ENCODE measurements at regions of chr7 and their contacts with region 1.

Region 1: DNA sequence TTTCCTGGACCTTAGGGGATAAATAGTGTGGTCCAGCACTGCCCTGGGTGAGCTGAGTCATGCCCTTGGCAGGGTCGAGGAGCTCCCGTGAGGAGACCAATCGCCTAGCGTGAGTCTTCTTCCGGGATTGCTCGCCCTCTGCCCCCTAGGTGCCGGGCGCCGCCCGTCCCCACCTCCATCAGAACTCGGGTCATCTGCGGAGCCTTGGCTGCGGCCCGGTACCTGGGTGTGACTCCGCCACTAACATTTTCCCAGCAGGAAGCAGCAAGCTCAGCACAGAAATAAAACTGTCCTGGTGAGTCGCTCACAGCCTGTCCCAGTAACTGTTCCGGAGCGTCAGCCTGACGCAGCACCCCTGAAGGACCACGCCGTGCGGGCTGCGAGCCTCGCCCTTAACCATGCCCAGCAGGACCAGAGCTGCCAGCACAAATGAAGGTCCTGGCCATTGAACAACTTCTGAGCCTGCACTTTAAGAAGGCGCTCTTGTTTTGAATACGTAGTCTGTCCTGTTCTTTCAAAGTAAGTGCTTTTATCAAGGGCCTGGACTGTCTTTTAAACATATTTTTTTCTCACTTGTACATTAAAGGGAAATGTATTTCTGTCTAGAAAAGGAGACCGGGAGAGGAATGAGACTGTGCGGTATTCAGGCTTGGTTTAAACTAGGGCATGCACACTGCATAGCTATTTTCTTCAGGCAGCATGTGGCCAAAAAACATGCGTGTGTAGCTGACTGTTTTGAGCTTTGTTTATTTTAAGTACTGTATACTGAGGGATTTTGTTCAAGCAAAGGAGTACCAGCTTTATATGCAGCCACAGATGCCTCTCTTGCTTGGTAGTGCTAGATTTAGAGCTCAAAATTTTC is 136.7 kb downstream of the HECW1 start:
- DNase-seq: peak; percentile 41
- H3K4me3 ChIP-seq: peak overlapping the region; percentile 34
- H3K27me3 ChIP-seq: no peaks in the 10 kb centered on the region
- CTCF ChIP-seq: no peak

Region 2: DNA sequence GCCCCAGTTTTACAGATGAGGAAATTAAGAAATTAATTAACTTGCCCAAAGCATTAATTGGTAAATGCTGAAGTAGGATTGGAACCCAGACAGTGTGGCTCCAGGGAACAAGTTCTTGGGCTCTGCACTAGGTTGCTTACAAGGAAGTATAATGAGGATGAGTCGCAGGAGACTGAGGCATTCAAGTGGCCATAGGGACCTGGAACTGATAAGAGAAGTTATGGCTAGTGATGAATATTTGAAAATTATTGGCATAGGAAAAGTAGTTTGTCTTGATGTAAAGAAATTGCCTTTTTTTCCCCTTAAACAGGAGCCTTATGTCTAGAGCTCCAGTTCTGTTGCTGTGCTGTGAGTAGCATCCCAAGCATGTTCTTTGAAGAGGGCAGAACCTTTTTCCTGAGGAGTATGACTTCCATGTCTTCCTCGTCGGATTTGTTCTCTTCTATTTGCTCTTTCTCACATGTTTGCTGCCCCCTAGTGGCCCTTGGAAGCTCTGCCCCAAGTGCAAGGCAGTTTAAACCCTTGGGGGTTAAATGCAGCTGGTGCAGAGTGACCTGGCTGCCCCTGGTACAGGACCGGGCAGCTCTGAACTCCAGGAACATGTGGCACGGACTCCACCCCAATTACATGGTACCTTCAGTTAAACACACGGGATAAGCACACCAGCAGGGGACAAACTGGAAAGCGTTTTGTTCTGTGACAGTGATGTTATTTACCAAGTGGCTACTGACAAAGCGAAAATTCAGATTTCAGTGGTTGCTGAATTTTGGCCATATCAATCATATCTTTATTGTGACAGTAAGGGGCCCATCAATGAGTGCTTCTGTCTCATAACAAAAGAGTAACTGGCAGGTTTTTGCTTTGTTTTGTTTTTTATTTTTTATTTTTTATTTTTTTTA is 12.0 kb after region 1 on chr7:
- CTCF ChIA-PET with region 1: interaction called, 45 read pairs
- POLR2A ChIA-PET with region 1: no interaction called
- DNase-seq: peak; percentile 37
- H3K4me3 ChIP-seq: no peak overlapping the region
- H3K27me3 ChIP-seq: no peaks in the 10 kb centered on the region
- CTCF ChIP-seq: peak; percentile 94

Region 3: GRCh38 chr7:43288391-43288790 is 39.2 kb after region 1 on chr7:
- CTCF ChIA-PET with region 1: no interaction called
- POLR2A ChIA-PET with region 1: no interaction called
- DNase-seq: no peak
- H3K4me3 ChIP-seq: no peak overlapping the region
- H3K27me3 ChIP-seq: no peaks in the 10 kb centered on the region
- CTCF ChIP-seq: no peak

Region 4: GRCh38 chr7:44244282-44244681 is 995.1 kb after region 1 on chr7:
- CTCF ChIA-PET with region 1: no interaction called
- POLR2A ChIA-PET with region 1: no interaction called
- DNase-seq: no peak
- H3K4me3 ChIP-seq: no peak overlapping the region
- H3K27me3 ChIP-seq: no peaks in the 10 kb centered on the region
- CTCF ChIP-seq: peak; percentile 44